ENCODE measurements at regions of chr16 and their contacts with region 1.

Region 1: GRCh38 chr16:56681939-56682702 is at the start of gene MT1X:
- DNase-seq: peak; percentile 77 to 94 (median 88)
- ATAC-seq: peak; percentile 100
- H3K4me3 ChIP-seq: peak within 1 kb of the TSS; percentile 93
- H3K4me3 Mint-ChIP-seq: peak within 1 kb of the TSS; percentile 86 to 99 (median 96)
- H3K27ac ChIP-seq: peak within 1 kb of the TSS; percentile 81
- H3K27ac Mint-ChIP-seq: peak within 1 kb of the TSS; percentile 89 to 99 (median 95)
- H3K4me1 ChIP-seq: peaks cover 13 to 15% of the 10 kb centered on the region in 2 donors
- H3K4me1 Mint-ChIP-seq: peaks cover 0 to 28% (median 25%) of the 10 kb centered on the region in 7 donors
- H3K27me3 ChIP-seq: no peaks in the 10 kb centered on the region
- H3K27me3 Mint-ChIP-seq: peaks cover 0 to 2% (median 0%) of the 10 kb centered on the region in 5 donors
- total RNA-seq, gene MT1X: 15.0 to 70.7 (median 25.9) TPM

Region 2: GRCh38 chr16:56269811-56270684 is 412.1 kb before region 1 on chr16:
- CTCF ChIA-PET with region 1: no interaction called
- POLR2A ChIA-PET with region 1: no interaction called
- intact Hi-C with region 1: no loop called
- DNase-seq: no peak
- ATAC-seq: no peak
- H3K4me3 ChIP-seq: no peak overlapping the region
- H3K4me3 Mint-ChIP-seq: no peak overlapping the region
- H3K27ac ChIP-seq: no peak overlapping the region
- H3K27ac Mint-ChIP-seq: no peak overlapping the region
- H3K4me1 ChIP-seq: no peaks in the 10 kb centered on the region
- H3K4me1 Mint-ChIP-seq: peaks cover 0 to 2% (median 0%) of the 10 kb centered on the region in 7 donors
- H3K27me3 ChIP-seq: no peaks in the 10 kb centered on the region
- H3K27me3 Mint-ChIP-seq: peaks cover 12 to 47% (median 22%) of the 10 kb centered on the region in 5 donors

Region 3: GRCh38 chr16:56513972-56514371 is 168.1 kb before region 1 on chr16:
- CTCF ChIA-PET with region 1: no interaction called
- POLR2A ChIA-PET with region 1: interaction called, 6 read pairs
- intact Hi-C with region 1: loop called in 1 of 2 experiments (anchors 1 kb)
- DNase-seq: peak in 7 of 9 donors; percentile 37 to 64 (median 56)
- ATAC-seq: peak; percentile 92
- H3K4me3 ChIP-seq: no peak overlapping the region
- H3K4me3 Mint-ChIP-seq: peak overlapping the region in 2 of 10 donors; percentile 3 to 6
- H3K27ac ChIP-seq: no peak overlapping the region
- H3K27ac Mint-ChIP-seq: peak overlapping the region in 1 of 9 donors; percentile 39
- H3K4me1 ChIP-seq: peaks cover 0 to 19% of the 10 kb centered on the region in 2 donors
- H3K4me1 Mint-ChIP-seq: peaks cover 10 to 77% (median 64%) of the 10 kb centered on the region in 7 donors
- H3K27me3 ChIP-seq: no peaks in the 10 kb centered on the region
- H3K27me3 Mint-ChIP-seq: no peaks in the 10 kb centered on the region

Region 4: DNA sequence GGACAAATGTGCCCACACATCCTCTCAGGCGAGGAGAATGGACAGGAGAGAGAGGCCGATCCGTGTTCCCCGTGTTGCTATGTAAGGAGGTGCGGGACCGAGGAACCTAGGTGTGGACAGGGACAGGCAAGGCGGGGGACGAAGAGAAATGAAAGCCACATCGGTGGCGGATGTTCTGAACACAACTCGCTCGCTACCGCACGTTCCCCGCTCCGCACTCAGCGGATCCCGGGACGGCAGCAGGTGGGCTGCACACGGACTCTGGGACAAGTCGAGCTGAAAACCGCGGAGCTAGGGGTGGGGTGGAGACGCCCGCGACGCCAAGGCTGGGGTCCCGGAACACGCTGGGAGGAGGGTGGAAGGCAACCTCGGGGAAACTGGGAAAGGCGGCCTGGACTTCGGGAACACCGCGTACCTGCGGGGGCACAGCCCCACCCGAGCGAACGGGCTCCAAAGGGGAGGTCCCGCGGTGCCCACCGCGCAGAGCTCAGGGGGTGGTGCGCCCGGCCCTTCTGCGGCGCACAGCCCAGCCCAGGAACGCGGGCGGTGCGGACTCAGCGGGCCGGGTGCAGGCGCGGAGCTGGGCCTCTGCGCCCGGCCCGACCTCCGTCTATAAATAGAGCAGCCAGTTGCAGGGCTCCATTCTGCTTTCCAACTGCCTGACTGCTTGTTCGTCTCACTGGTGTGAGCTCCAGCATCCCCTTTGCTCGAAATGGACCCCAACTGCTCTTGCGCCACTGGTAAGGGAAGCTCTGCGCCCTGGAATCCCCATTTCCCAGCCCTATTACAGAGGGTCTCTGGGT is 56.8 kb before region 1 on chr16 and contains the start of gene MT1E:
- CTCF ChIA-PET with region 1: no interaction called
- POLR2A ChIA-PET with region 1: no interaction called
- intact Hi-C with region 1: loop called in 1 of 2 experiments (anchors 1 kb)
- DNase-seq: peak in 7 of 9 donors; percentile 19 to 76 (median 41)
- ATAC-seq: peak; percentile 89
- H3K4me3 ChIP-seq: peak within 1 kb of the TSS; percentile 54
- H3K4me3 Mint-ChIP-seq: peak within 1 kb of the TSS; percentile 76 to 98 (median 90)
- H3K27ac ChIP-seq: peak within 1 kb of the TSS; percentile 15
- H3K27ac Mint-ChIP-seq: peak within 1 kb of the TSS; percentile 61 to 95 (median 82)
- H3K4me1 ChIP-seq: peaks cover 0 to 13% of the 10 kb centered on the region in 2 donors
- H3K4me1 Mint-ChIP-seq: peaks cover 11 to 27% (median 15%) of the 10 kb centered on the region in 7 donors
- H3K27me3 ChIP-seq: no peaks in the 10 kb centered on the region
- H3K27me3 Mint-ChIP-seq: peaks cover 6 to 13% (median 12%) of the 10 kb centered on the region in 5 donors
- total RNA-seq, gene MT1E: 0.45 to 166 (median 2.5) TPM in 4 of 5 experiments, not detected in the other

Region 5: GRCh38 chr16:56643080-56643778 is 38.9 kb before region 1 on chr16:
- CTCF ChIA-PET with region 1: interaction called, 3 read pairs
- POLR2A ChIA-PET with region 1: interaction called, 6 read pairs
- intact Hi-C with region 1: loop called (anchors 2 to 5 kb)
- DNase-seq: peak; percentile 42 to 79 (median 57)
- ATAC-seq: peak; percentile 99
- H3K4me3 ChIP-seq: peak overlapping the region; percentile 48
- H3K4me3 Mint-ChIP-seq: peak overlapping the region; percentile 60 to 84 (median 80)
- H3K27ac ChIP-seq: peak overlapping the region; percentile 40
- H3K27ac Mint-ChIP-seq: peak overlapping the region in 5 of 9 donors; percentile 37 to 67 (median 54)
- H3K4me1 ChIP-seq: peaks cover 11 to 16% of the 10 kb centered on the region in 2 donors
- H3K4me1 Mint-ChIP-seq: peaks cover 15 to 31% (median 25%) of the 10 kb centered on the region in 7 donors
- H3K27me3 ChIP-seq: peaks cover 0 to 4% of the 10 kb centered on the region in 2 donors
- H3K27me3 Mint-ChIP-seq: peaks cover 28 to 84% (median 34%) of the 10 kb centered on the region in 5 donors

Region 6: DNA sequence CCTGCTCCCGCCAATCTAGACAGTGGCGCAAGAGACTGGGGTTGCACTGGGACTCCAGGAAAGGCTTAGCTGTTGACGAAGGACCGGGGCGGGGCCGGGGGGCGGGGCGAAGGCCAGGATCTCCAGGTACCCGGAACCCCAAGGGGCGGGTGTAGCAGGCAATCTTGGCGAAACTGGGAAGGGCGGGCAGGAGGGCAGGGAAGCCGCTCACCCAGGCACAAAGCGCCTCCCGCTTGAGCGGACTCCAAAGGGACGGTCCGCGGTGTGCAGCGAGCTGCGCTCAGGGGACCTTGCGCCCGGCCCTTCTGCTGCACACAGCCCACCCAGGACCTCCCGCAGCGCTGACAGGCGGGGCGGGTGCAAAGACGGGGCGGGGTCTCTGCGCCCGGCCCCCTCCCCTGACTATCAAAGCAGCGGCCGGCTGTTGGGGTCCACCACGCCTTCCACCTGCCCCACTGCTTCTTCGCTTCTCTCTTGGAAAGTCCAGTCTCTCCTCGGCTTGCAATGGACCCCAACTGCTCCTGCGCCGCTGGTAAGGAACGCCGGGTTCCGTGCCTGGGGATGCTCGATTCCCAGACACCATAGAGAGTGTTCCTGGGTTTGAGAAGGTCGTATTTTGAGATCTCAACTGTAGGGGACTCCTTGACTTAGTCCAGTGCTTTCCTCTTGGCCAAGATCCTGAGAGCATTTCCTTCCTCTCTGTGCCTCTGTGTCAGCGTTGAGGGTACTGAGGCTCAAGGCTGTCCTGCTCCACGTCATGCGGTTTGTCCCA is 24.4 kb before region 1 on chr16 and contains the start of gene MT1F:
- CTCF ChIA-PET with region 1: no interaction called
- POLR2A ChIA-PET with region 1: interaction called, 19 read pairs
- intact Hi-C with region 1: loop called (anchors 1 kb)
- DNase-seq: peak in 8 of 9 donors; percentile 35 to 66 (median 56)
- ATAC-seq: peak; percentile 80
- H3K4me3 ChIP-seq: peak within 1 kb of the TSS; percentile 91
- H3K4me3 Mint-ChIP-seq: peak within 1 kb of the TSS; percentile 79 to 99 (median 94)
- H3K27ac ChIP-seq: peak within 1 kb of the TSS; percentile 64
- H3K27ac Mint-ChIP-seq: peak within 1 kb of the TSS; percentile 67 to 97 (median 94)
- H3K4me1 ChIP-seq: peaks cover 7 to 12% of the 10 kb centered on the region in 2 donors
- H3K4me1 Mint-ChIP-seq: peaks cover 14 to 46% (median 27%) of the 10 kb centered on the region in 7 donors
- H3K27me3 ChIP-seq: no peaks in the 10 kb centered on the region
- H3K27me3 Mint-ChIP-seq: peaks cover 0 to 21% (median 0%) of the 10 kb centered on the region in 5 donors
- total RNA-seq, gene MT1F: 5.6 to 20.6 (median 8.7) TPM

Region 7: DNA sequence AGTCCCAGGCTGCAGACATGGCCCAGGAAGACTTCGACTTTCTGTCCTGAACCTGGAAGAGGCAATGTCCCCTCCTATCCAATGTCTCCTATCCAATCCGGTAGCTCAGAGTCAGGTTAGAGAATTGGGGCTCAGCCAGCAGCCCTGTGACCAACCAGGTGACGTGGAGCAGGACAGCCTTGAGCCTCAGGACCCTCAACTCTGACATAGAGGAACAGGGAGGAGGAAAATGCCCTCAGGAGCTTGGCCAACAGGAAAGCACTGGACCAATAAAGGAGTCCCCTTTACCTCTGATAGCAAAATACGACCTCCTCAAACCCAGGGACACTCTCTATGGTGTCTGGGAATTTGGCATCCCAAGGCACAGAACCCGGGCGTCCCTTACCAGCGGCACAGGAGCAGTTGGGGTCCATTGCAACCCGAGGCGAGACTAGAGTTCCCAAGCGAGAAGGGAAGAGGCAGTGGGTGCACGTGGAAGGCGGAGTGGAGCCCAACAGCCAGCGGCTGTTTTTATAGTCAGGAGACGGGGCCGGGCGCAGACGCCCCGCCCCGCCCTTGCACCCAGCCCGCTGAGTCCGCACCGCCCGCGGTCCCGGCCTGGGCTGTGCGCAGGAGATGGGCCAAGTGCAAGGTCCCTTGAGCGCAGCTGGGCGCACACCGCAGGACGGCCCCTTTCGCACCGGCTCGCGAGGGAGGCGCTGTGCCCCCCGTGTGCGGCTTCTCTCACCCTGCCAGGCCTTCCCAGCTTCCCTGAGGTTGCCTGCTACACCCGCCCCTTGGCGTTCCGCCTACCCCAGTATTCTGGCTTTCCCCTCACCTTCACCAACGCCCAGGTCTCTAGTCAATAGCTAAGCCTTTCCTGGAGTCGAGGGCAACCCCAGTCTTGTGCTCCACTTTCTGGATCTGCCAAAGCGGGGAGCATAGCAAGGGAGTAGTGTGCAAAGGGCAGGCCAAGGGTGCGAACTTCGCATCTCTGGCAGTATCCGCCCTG is 14.2 kb before region 1 on chr16 and contains the start of gene MT1G:
- CTCF ChIA-PET with region 1: no interaction called
- POLR2A ChIA-PET with region 1: interaction called, 18 read pairs
- intact Hi-C with region 1: loop called (anchors 1 kb)
- DNase-seq: peak in 1 of 9 donors; percentile 58
- ATAC-seq: peak; percentile 57
- H3K4me3 ChIP-seq: no peak within 1 kb of the TSS
- H3K4me3 Mint-ChIP-seq: peak within 1 kb of the TSS in 9 of 10 donors; percentile 25 to 78 (median 50)
- H3K27ac ChIP-seq: no peak within 1 kb of the TSS
- H3K27ac Mint-ChIP-seq: peak within 1 kb of the TSS in 2 of 9 donors; percentile 16 to 43
- H3K4me1 ChIP-seq: no peaks in the 10 kb centered on the region
- H3K4me1 Mint-ChIP-seq: peaks cover 0 to 38% (median 24%) of the 10 kb centered on the region in 7 donors
- H3K27me3 ChIP-seq: peaks cover 0 to 25% of the 10 kb centered on the region in 2 donors
- H3K27me3 Mint-ChIP-seq: peaks cover 44 to 85% (median 49%) of the 10 kb centered on the region in 5 donors
- total RNA-seq, gene MT1G: 1.2 to 36.1 TPM in 2 of 5 experiments, not detected in the others

Region 8: DNA sequence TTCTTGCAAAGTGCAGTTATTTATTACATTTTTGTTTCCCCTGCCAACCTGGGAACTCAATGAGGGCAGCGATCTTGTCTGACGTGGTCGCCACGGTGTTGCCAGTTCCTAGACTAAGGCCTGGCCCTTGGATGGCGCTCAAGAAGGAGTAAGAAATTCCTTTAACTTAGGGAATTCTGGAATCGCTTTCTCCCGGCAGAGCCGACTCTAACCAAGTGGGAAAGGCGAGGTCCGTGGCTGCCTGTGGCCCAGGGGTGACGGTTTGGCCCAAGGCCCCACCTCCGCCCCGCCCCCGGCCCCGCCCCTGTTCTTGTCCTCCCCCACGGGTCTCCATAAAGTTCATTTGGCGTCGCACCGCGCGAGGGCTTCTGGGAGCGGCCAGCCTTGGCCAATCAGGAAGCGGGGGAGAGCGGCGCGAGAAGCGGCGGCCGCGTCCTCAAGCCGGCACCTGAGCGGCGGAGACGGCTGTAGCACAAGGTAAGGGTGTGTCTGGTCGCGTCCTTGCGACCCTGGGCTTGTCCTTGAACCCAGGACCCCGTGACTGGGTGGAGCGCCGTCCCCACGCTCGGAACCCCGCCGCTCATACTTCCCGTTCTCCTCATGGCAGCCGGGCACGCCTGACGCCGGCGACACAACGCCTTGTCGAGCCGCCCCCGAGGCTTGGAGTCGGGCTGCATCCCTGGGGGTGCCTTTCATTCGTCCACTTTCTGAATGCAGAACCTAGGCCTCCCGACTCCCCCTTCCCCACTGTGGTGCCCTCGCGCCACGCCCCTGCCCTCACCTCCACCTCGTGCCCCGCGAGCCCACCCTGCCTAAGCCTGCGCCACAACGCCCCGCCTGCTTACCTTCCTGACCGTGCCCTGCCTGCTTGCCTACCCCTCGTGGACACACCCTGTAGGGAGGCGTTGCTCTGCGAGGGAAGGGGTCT is 47.9 kb after region 1 on chr16 and contains the start of gene NUP93:
- CTCF ChIA-PET with region 1: no interaction called
- POLR2A ChIA-PET with region 1: interaction called, 3 read pairs
- intact Hi-C with region 1: loop called (anchors 1 kb)
- DNase-seq: peak; percentile 76 to 90 (median 88)
- ATAC-seq: peak; percentile 99
- H3K4me3 ChIP-seq: peak within 1 kb of the TSS; percentile 82
- H3K4me3 Mint-ChIP-seq: peak within 1 kb of the TSS in 1 of 10 donors; percentile 90
- H3K27ac ChIP-seq: peak within 1 kb of the TSS; percentile 84
- H3K27ac Mint-ChIP-seq: peak within 1 kb of the TSS in 7 of 9 donors; percentile 82 to 98 (median 94)
- H3K4me1 ChIP-seq: peaks cover 22 to 23% of the 10 kb centered on the region in 2 donors
- H3K4me1 Mint-ChIP-seq: peaks cover 10 to 31% (median 26%) of the 10 kb centered on the region in 7 donors
- H3K27me3 ChIP-seq: no peaks in the 10 kb centered on the region
- H3K27me3 Mint-ChIP-seq: no peaks in the 10 kb centered on the region
- total RNA-seq, gene NUP93: 53.0 to 90.5 (median 58.3) TPM